Left cardiac atrium (tissue), 4 donors: ENCODE measurements at regions of chr14 and their contacts with region 1.

Region 1: GRCh38 chr14:76633571-76633970 is 127.7 kb upstream of the VASH1 start:
- DNase-seq: no peak
- ATAC-seq: no peak

Region 2: DNA sequence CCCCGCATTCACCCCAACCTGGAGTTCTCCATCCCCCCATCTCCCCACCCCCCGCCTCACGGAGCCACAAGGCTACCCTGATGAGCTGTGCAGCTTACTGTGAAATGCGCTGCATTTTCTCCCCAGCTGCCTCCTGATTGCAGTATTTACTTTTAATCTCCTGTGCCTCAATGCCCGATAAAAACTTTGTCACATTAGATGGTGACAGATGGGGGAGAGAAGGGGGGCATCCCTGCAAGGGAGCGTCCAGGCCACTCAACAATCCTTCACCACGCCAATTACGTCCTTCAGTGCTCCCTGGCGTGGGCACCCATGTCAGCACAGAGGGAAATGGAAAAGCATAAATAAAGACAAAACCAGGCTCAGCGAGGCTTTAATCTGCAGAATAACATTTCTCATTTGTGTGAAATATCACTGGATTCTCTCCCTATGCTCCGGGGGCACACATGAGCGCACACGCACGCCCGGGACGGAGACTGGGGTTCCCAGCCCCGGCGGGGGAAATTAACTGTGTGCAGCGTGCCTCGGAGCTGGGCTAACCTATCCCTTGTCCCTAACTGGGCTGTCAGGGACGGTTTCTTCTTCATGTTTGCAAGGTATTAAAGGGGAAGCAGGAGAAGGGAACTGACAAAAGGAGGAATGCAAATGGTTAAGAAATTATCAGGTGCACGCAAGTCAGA is 59.0 kb before region 1 on chr14:
- intact Hi-C with region 1: loop called in 1 of 2 experiments (anchors 2 kb)
- DNase-seq: no peak
- ATAC-seq: no peak

Region 3: GRCh38 chr14:76720382-76720813 is 86.8 kb after region 1 on chr14:
- intact Hi-C with region 1: no loop called
- DNase-seq: peak; percentile 88
- ATAC-seq: peak; percentile 80 to 87